Activated T-helper 1 cell treated with anti-CD3 and anti-CD28 coated beads, Interleukin-12 subunit alpha, Interleukin-12 subunit beta, Interleukin-2, Interleukin-4 antibody, amounts not matched to agents 30 ng/mL and 10 ng/mL and 1 ng/mL, durations not matched to agents 14 hours and 24 hours and 36 hours (primary cell): ENCODE measurements at regions of chr17 and their contacts with region 1.

Region 1: DNA sequence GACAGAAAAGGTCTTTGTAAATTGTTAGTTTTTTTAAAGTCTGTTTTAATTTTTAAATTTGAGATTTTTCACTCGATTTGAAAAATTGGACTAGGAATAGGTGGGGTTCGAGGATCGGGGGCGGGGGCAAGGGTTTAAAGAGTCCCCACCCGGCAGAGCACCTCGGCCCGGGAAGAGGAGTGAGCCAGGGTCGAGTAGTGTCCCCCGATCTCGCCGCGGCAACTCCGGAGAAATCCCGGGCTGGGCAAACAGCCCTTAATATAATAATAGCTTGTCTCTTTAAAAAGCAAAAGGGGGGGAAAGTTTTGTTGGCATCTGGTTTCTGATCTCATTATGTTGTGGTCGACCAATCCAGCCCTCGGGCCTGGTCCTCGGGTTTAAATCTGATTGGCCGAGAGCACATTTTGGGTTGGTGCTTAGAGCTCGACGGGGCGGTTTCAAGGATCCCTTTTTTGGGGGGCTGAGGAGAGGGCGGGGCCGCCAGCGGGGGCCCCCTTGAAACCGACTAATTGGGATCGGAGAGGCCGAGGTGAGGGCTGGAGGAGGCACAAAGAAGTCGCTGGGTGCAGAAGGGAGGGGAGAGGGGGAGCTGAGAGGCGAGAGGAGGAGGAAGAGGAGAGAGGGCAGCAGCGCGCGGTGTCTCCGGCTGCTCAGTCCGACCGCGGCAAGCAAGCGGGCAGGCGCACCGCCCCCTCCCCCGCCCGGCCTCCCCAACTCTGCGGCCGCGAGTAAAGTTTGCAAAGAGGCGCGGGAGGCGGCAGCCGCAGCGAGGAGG is at the start of gene FZD2:
- DNase-seq: peak; percentile 18
- H3K4me3 Mint-ChIP-seq: peak within 1 kb of the TSS; percentile 87
- H3K27ac Mint-ChIP-seq: peak within 1 kb of the TSS; percentile 63
- H3K4me1 Mint-ChIP-seq: peaks cover 11% of the 10 kb centered on the region
- H3K27me3 Mint-ChIP-seq: peaks cover 67% of the 10 kb centered on the region
- total RNA-seq, gene FZD2: not detected in 2 replicates

Region 2: GRCh38 chr17:43900183-43900857 is 656.7 kb before region 1 on chr17:
- intact Hi-C with region 1: loop called (anchors 10 kb)
- DNase-seq: peak; percentile 83
- H3K4me3 Mint-ChIP-seq: peak overlapping the region; percentile 73
- H3K27ac Mint-ChIP-seq: no peak overlapping the region
- H3K4me1 Mint-ChIP-seq: peaks cover 9% of the 10 kb centered on the region
- H3K27me3 Mint-ChIP-seq: peaks cover 28% of the 10 kb centered on the region

Region 3: DNA sequence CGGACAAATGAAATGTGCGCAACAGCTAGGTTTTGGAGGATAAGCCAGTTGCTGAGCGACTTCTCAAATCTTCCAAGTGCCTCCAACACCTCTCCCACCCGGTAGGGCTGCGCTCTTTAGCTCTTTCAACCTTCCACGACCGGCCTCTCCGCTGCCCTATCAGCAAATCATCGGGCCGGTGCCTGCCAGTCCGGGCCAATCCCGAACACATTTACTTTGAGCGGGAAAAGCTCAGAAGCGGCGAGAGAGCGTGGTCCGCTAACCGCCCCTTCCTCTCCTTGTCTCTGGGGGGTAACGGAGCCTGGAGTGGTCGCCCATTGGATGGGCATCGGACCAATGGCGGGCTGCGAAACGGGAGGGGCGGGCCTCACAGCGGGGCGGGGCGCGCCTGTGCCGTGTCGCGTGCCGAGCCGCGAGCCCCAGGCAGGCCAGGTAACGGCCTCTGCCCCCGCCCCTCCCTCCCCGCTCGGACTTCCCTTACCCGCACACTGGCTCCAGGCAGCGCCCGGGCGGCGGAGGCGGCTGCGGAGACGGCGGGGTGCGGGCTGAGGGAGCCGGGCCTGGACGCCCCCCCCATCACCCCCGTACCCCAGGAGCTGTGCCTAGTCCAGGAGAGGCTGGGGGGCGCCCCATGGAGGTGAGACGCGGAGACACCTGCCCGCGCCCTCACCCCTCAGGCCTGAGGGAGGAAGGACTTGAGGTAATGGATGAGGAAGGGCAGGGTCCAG is 99.1 kb after region 1 on chr17 and contains the start of gene MEIOC:
- intact Hi-C with region 1: loop called (anchors 5 kb)
- DNase-seq: no peak
- H3K4me3 Mint-ChIP-seq: peak within 1 kb of the TSS; percentile 65
- H3K27ac Mint-ChIP-seq: no peak within 1 kb of the TSS
- H3K4me1 Mint-ChIP-seq: no peaks in the 10 kb centered on the region
- H3K27me3 Mint-ChIP-seq: peaks cover 33% of the 10 kb centered on the region
- total RNA-seq, gene MEIOC: 0.12 and 0.29 TPM in 2 replicates

Region 4: GRCh38 chr17:44829523-44830358 is 272.7 kb after region 1 on chr17 and contains the start of gene GJC1:
- intact Hi-C with region 1: loop called (anchors 2 kb)
- DNase-seq: no peak
- H3K4me3 Mint-ChIP-seq: peak within 1 kb of the TSS; percentile 82
- H3K27ac Mint-ChIP-seq: peak within 1 kb of the TSS; percentile 44
- H3K4me1 Mint-ChIP-seq: peaks cover 7% of the 10 kb centered on the region
- H3K27me3 Mint-ChIP-seq: peaks cover 62% of the 10 kb centered on the region
- total RNA-seq, gene GJC1: 4.7 and 5.7 TPM in 2 replicates